CD4-positive, alpha-beta memory T cell (primary cell): ENCODE measurements at regions of chr5 and their contacts with region 1.

Region 1: GRCh38 chr5:177296581-177296980 is 6.9 kb downstream of the RAB24 start:
- DNase-seq: peak in 1 of 5 donors; percentile 38
- H3K4me3 ChIP-seq: no peak overlapping the region
- H3K4me3 Mint-ChIP-seq: peak overlapping the region in 4 of 8 donors; percentile 17 to 61 (median 37)
- H3K27ac ChIP-seq: no peak overlapping the region
- H3K27ac Mint-ChIP-seq: peak overlapping the region; percentile 60 to 90 (median 84)
- H3K4me1 ChIP-seq: peaks cover 37% of the 10 kb centered on the region
- H3K4me1 Mint-ChIP-seq: peaks cover 36 to 57% (median 47%) of the 10 kb centered on the region in 4 donors
- H3K27me3 ChIP-seq: no peaks in the 10 kb centered on the region
- H3K27me3 Mint-ChIP-seq: no peaks in the 10 kb centered on the region

Region 2: GRCh38 chr5:175321927-175322532 is 1974.6 kb before region 1 on chr5:
- CTCF ChIA-PET with region 1: no interaction called
- POLR2A ChIA-PET with region 1: no interaction called
- intact Hi-C with region 1: no loop called
- DNase-seq: peak in 4 of 5 donors; percentile 3 to 22 (median 10)
- H3K4me3 ChIP-seq: no peak overlapping the region
- H3K4me3 Mint-ChIP-seq: no peak overlapping the region
- H3K27ac ChIP-seq: no peak overlapping the region
- H3K27ac Mint-ChIP-seq: peak overlapping the region in 1 of 7 donors; percentile 42
- H3K4me1 ChIP-seq: no peaks in the 10 kb centered on the region
- H3K4me1 Mint-ChIP-seq: no peaks in the 10 kb centered on the region
- H3K27me3 ChIP-seq: no peaks in the 10 kb centered on the region
- H3K27me3 Mint-ChIP-seq: peaks cover 6 to 8% of the 10 kb centered on the region in 2 donors

Region 3: DNA sequence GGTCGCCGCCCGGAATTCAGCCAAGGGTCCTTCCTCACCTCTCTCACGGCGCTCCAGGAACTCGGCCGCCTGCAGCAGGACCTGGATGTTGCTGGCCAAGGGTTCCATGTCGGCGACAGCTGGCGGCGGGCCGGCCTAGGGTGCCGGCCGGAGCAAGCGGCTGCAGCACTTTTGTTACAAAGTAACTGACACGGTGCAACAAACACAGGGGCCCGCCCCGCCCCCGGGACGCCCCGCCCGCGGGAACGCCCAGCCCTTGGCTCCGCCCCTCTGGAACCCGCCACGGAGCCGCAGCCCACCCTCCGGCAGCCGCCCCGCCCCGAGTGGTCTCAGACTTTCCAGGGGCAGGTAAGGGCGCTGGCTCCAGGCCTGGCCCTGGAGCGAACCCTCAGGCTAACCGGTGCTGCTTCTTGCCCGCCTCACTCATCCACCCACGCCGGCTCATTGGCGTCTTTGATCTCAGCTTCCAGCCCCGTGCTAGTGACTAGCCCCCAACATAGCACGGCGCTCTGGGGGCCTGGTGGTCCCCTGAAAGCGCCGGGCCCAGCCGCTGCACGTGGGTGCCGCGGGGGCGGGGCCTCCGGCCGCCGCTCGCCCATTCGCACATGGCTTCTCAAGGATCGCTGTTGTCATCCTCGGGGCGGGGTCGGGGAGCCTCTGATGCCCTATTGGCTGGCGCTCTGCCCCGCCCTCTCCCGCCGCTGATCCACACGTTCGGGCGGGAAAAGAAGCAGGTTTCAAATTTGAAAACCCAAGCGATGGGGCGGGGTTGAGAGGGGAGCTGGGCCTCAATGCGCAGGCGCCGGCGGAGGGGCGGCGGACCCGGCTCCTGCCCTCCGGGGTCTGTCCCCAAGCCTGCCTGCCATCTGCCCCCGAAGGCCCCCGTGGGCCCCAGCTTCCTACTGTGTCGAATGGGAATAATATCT is 15.4 kb after region 1 on chr5 and contains the start of gene MXD3:
- CTCF ChIA-PET with region 1: interaction called, 42 read pairs
- POLR2A ChIA-PET with region 1: interaction called, 31 read pairs
- intact Hi-C with region 1: no loop called
- DNase-seq: peak; percentile 90 to 96 (median 93)
- H3K4me3 ChIP-seq: peak within 1 kb of the TSS; percentile 24 to 64
- H3K4me3 Mint-ChIP-seq: peak within 1 kb of the TSS; percentile 70 to 86 (median 80)
- H3K27ac ChIP-seq: peak within 1 kb of the TSS; percentile 49
- H3K27ac Mint-ChIP-seq: peak within 1 kb of the TSS; percentile 29 to 83 (median 75)
- H3K4me1 ChIP-seq: peaks cover 41% of the 10 kb centered on the region
- H3K4me1 Mint-ChIP-seq: peaks cover 17 to 49% (median 30%) of the 10 kb centered on the region in 4 donors
- H3K27me3 ChIP-seq: no peaks in the 10 kb centered on the region
- H3K27me3 Mint-ChIP-seq: no peaks in the 10 kb centered on the region
- total RNA-seq, gene MXD3: 17.3 TPM